Activated T-helper 1 cell treated with anti-CD3 and anti-CD28 coated beads, Interleukin-12 subunit alpha, Interleukin-12 subunit beta, Interleukin-2, Interleukin-4 antibody, amounts not matched to agents 30 ng/mL and 10 ng/mL and 1 ng/mL, durations not matched to agents 14 hours and 24 hours and 36 hours (primary cell): ENCODE measurements at regions of chr1 and their contacts with region 1.

Region 1: DNA sequence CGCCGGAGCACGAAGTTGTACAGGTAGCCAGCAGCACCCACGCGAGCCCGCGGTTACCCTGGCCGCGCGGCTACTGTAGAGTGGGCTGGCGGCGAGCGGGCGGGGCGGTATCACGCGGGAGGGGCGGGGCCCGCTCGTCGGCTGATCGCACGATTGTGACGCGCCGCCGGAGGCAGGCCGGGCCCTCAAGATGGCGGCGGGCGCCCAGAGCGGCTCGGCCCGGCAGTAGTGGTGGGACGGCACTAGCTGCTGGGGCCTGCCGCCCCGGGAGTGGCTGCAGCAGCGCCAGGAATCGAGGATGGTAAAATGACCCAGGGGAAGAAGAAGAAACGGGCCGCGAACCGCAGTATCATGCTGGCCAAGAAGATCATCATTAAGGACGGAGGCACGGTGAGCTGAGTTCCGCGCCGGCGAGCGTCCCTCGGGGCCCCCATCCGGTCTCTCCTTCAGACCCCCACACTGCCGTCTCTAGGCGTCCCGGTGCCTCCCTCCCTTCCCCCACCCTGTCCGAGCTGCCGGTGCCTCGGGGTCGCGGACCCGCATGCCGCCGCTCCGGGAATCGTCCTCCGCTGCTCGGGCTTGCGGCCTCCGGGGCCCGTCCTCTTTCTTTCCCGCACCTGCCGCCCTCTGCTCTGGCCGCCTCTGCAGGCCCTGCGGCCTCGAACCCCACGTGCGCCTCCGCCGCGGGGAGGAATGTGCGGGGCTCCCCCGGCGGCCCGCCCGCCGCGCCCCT is 68.3 kb downstream of the SLC35A3 start:
- DNase-seq: peak; percentile 85
- H3K4me3 Mint-ChIP-seq: peak overlapping the region; percentile 97
- H3K27ac Mint-ChIP-seq: peak overlapping the region; percentile 98
- H3K4me1 Mint-ChIP-seq: peaks cover 60% of the 10 kb centered on the region
- H3K27me3 Mint-ChIP-seq: no peaks in the 10 kb centered on the region

Region 2: DNA sequence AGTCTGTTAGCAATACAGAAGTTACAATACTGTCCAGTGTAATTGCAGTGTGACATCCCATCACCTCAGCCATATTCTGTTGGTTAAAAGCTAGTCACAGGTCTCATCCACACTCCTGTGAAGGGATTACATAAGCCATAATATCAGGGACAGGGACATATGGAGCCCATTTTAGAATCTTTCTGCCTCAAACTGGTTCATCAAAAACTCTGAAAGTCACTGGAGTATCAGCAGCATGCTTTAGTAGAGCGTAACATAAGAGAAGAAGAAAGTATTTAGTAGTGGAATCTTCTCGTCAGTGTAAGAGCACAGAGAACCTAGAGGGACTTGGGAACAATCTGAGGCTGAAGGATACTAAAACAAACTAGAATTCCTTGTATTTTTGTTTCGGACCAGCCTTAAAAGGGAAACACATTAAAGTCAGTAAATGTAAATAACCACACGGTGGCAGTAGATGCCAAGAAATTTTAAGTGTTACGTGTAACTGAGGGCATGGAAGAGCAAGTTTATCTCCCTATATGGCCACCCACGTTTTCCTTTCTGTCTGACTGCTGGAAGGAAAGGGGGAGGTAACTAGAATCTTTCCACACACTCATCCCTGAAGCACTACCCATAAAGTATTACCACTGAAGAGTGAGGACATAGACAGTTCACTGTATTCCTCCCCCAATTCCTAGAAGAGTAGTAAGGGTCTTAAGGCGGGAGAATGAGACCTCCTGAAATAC is 229.5 kb before region 1 on chr1:
- intact Hi-C with region 1: loop called (anchors 1 kb)
- DNase-seq: peak; percentile 29
- H3K4me3 Mint-ChIP-seq: no peak overlapping the region
- H3K27ac Mint-ChIP-seq: peak overlapping the region; percentile 15
- H3K4me1 Mint-ChIP-seq: peaks cover 17% of the 10 kb centered on the region
- H3K27me3 Mint-ChIP-seq: peaks cover 13% of the 10 kb centered on the region

Region 3: GRCh38 chr1:99906535-99906934 is 131.6 kb before region 1 on chr1:
- intact Hi-C with region 1: no loop called
- DNase-seq: no peak
- H3K4me3 Mint-ChIP-seq: no peak overlapping the region
- H3K27ac Mint-ChIP-seq: no peak overlapping the region
- H3K4me1 Mint-ChIP-seq: no peaks in the 10 kb centered on the region
- H3K27me3 Mint-ChIP-seq: no peaks in the 10 kb centered on the region

Region 4: DNA sequence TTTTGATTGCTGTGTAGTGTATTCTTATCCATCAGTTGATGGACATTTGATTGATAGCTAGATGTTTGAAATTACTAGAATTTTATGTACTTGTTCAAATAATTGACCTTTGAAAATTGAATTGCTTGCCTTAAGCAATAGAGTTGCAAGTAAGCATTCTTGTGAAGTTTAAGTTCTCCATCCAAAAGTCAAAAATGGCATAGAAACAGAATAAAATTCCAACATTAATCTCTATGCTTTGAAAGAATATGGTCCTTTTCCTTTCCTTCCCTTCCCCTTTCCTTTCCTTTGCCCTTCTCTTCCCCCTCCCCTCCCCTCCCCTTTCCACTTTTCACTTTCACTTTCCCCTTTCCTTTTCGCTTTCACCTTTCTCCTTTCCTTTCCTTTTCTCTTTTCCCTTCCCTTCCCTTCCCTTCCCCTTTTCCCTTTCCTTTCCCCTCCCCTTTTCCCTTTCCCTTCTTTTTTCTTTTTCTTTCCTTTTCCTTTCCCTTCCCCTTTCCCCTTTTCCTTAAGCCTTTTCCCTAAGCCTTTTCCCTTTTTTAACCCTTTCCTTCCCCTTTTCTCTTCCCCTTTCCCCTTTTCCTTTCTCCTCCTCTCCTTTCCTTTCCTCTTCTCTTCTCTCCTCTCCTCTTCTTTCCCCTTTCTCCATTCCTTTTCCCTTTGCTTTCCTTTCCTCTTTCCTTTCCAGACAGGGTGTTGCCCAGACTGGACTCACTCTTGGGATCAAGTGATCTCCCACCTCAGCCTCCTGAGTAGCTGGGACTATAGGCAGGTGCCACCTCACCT is 27.3 kb after region 1 on chr1:
- intact Hi-C with region 1: no loop called
- DNase-seq: no peak
- H3K4me3 Mint-ChIP-seq: no peak overlapping the region
- H3K27ac Mint-ChIP-seq: no peak overlapping the region
- H3K4me1 Mint-ChIP-seq: peaks cover 27% of the 10 kb centered on the region
- H3K27me3 Mint-ChIP-seq: no peaks in the 10 kb centered on the region

Region 5: GRCh38 chr1:100077531-100077930 is 39.4 kb after region 1 on chr1:
- intact Hi-C with region 1: loop called (anchors 5 kb)
- DNase-seq: no peak
- H3K4me3 Mint-ChIP-seq: no peak overlapping the region
- H3K27ac Mint-ChIP-seq: no peak overlapping the region
- H3K4me1 Mint-ChIP-seq: peaks cover 6% of the 10 kb centered on the region
- H3K27me3 Mint-ChIP-seq: no peaks in the 10 kb centered on the region

Region 6: GRCh38 chr1:100265931-100266740 is 228.0 kb after region 1 on chr1 and contains the start of gene RTCA:
- intact Hi-C with region 1: loop called (anchors 1 kb)
- DNase-seq: peak; percentile 94
- H3K4me3 Mint-ChIP-seq: peak within 1 kb of the TSS; percentile 100
- H3K27ac Mint-ChIP-seq: peak within 1 kb of the TSS; percentile 100
- H3K4me1 Mint-ChIP-seq: peaks cover 50% of the 10 kb centered on the region
- H3K27me3 Mint-ChIP-seq: peaks cover 4% of the 10 kb centered on the region
- total RNA-seq, gene RTCA: 48.1 and 52.0 TPM in 2 replicates

Region 7: DNA sequence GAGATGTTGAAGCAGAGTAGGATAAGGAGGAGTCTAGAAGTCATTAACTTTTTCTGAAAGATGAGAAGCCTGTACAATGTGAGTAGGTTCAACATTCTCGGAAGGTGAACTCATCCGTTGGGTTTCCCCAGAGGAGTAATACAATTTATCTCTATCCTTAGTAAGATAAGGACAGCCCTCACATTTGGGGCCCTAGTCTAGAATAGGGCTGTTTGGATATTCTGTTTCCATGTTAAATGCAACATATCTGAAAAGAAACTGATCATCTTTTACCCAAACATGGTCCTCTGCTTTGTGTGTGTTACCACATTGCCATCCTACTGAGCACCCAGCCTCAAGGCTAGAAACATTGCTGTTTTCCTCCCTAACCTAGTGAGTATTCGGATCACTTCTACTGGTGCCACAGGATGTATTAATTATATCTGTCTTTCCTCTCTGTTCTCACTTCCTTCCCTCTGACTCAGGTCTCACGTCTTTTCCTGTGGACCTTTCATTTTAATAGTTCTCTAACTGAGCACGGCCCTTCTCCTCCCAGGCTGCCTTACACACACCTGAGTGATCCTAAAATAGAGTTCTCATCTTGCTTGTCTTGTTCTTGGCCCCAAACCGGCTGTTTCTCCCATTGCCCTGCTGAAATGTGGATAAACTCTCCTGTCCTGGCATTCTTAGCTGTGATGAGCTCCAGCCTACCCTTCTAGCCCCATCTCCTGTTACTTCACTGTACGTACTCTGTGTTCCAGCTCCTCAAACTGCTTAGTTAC is 405.9 kb after region 1 on chr1:
- intact Hi-C with region 1: loop called (anchors 2 kb)
- DNase-seq: peak; percentile 22
- H3K4me3 Mint-ChIP-seq: peak overlapping the region; percentile 61
- H3K27ac Mint-ChIP-seq: peak overlapping the region; percentile 95
- H3K4me1 Mint-ChIP-seq: peaks cover 91% of the 10 kb centered on the region
- H3K27me3 Mint-ChIP-seq: no peaks in the 10 kb centered on the region

Region 8: DNA sequence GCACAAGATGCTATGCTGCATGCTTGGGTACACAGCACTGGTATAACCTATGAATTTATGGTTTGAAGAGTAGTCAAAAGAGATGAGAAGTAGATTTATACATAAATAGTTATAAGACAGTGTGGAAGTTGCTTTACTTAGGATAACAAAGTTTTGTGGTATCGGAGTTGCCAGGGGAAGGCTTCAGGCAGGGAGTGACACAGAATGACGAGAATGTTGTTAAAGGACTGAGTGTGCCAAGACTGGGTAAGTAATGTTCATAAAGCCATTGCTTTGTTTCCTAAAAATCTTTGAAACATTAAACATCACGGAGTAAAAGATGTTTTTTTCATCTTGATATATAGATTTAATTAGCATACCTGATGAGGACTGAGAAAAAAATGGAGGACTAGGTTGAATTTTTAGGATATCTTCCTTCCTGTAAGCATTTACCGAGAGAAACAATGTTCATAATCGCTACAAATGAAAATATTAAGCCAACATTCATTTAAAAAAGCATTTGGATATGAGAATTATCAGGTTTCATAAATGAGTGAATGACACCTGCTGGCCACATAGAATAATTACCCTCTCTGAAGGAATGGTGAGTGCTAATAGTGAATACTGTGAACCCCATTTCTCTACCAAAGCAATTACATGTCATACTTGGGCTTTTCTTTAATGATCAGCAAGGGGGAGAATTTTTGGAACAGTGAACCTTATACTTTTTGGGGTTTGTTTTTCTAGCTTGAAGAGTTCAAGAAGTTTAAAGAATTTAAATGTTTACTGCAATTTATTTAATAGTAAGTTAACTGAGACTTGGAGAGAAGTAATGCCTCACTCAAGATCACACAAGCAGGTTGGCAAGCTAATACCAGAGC is 828.2 kb after region 1 on chr1:
- intact Hi-C with region 1: loop called (anchors 10 kb)
- DNase-seq: no peak
- H3K4me3 Mint-ChIP-seq: no peak overlapping the region
- H3K27ac Mint-ChIP-seq: no peak overlapping the region
- H3K4me1 Mint-ChIP-seq: no peaks in the 10 kb centered on the region
- H3K27me3 Mint-ChIP-seq: no peaks in the 10 kb centered on the region